OCI-LY7 (cell line): ENCODE measurements at regions of chr1 and their contacts with region 1.

Region 1: GRCh38 chr1:39196244-39197215 is 8.0 kb upstream of the MACF1 start:
- DNase-seq: peak; percentile 92
- H3K4me3 ChIP-seq: peak overlapping the region; percentile 60
- H3K27ac ChIP-seq: peak overlapping the region; percentile 98
- H3K4me1 ChIP-seq: peaks cover 81% of the 10 kb centered on the region
- CTCF ChIP-seq: no peak

Region 2: GRCh38 chr1:38973659-38974424 is 222.7 kb before region 1 on chr1:
- CTCF ChIA-PET with region 1: no interaction called
- POLR2A ChIA-PET with region 1: no interaction called
- intact Hi-C with region 1: no loop called
- DNase-seq: no peak
- H3K4me3 ChIP-seq: no peak overlapping the region
- H3K27ac ChIP-seq: no peak overlapping the region
- H3K4me1 ChIP-seq: no peaks in the 10 kb centered on the region
- CTCF ChIP-seq: no peak

Region 3: DNA sequence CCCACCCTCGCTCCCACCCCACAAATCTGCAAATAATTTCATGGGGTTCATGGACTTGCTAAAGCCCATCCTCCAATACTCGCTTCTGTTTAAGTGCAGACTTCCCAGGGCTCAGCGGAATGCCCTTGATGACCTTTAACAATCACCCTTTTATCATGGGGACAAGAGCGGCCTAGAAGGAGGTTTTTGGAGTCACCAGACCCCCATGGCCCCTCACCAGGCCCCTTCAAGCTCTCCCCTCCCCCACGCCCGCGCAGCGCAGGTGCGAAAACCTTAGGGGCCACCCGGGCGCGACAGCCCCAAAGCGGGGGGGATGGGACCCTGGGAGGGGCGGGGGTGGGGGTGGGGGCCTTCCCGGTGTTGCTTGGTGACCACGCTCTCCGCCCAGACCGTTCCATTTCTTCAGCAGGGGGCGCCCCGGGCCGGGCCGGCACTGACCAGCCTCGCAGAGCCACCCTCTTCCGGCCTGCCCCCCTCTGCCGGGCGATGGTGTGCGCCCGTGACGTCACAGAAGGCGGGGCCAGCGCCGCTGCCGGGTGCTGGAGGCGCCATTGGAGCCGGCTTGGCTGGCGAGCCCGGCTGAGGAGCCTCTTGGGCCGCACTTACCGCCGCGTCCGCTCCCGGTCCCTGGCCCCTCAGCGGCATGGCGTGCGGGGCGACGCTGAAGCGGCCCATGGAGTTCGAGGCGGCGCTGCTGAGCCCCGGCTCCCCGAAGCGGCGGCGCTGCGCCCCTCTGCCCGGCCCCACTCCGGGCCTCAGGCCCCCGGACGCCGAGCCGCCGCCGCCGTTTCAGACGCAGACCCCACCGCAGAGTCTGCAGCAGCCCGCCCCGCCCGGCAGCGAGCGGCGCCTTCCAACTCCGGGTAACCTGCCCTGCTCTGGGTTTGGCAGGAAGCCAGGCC is 205.5 kb before region 1 on chr1 and contains the start of gene AKIRIN1:
- CTCF ChIA-PET with region 1: no interaction called
- POLR2A ChIA-PET with region 1: no interaction called
- intact Hi-C with region 1: no loop called
- DNase-seq: peak; percentile 95
- H3K4me3 ChIP-seq: peak within 1 kb of the TSS; percentile 93
- H3K27ac ChIP-seq: peak within 1 kb of the TSS; percentile 57
- H3K4me1 ChIP-seq: peaks cover 19% of the 10 kb centered on the region
- CTCF ChIP-seq: no peak
- total RNA-seq, gene AKIRIN1: 35.0 and 40.0 TPM in 2 replicates

Region 4: GRCh38 chr1:39098546-39099250 is 97.8 kb before region 1 on chr1:
- CTCF ChIA-PET with region 1: interaction called, 12 read pairs
- POLR2A ChIA-PET with region 1: no interaction called
- intact Hi-C with region 1: loop called (anchors 1 kb)
- DNase-seq: peak; percentile 81
- H3K4me3 ChIP-seq: no peak overlapping the region
- H3K27ac ChIP-seq: no peak overlapping the region
- H3K4me1 ChIP-seq: peaks cover 18% of the 10 kb centered on the region
- CTCF ChIP-seq: peak; percentile 89

Region 5: DNA sequence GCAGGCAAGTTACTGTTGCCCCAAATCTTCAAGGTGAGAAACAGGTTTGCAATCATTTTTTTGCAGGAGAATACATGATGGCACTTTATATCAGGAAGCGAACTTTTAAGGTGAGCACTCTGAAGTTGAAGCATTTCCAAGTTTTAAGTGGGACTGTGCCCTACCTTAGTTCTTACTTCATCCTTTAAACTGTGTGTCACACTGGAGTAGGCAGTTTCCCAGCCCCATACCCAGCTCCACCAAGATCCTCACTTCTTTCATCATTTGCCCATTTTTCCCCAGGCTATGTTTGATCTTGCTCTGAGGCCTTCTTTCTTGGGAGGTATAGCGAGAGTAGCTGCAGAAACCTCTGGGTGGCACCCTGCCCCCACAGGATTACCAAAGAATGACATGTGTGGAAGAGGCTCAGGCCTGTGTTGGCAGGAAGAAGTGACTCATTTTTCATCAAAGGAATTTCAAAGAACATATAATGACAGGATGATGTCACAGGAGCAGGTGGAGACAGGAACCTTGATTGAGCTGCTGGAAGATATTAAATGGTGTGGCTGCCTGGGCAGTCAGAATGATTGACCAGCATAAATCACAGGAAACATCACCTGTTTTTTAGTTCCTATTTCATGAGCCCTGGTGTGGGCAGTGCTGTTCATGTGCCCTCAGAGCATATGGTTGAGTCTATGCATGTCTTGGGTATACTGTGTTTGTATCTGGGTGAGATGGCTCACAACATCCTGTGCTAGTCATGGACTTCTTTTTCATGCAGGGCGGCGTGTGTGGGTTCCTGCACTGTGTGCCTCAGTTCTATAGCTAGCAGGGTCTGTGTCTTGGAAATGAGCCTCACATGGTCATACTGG is 12.8 kb before region 1 on chr1:
- CTCF ChIA-PET with region 1: interaction called, 12 read pairs
- POLR2A ChIA-PET with region 1: interaction called, 4 read pairs
- intact Hi-C with region 1: no loop called
- DNase-seq: peak; percentile 87
- H3K4me3 ChIP-seq: no peak overlapping the region
- H3K27ac ChIP-seq: peak overlapping the region; percentile 64
- H3K4me1 ChIP-seq: peaks cover 25% of the 10 kb centered on the region
- CTCF ChIP-seq: peak; percentile 94

Region 6: GRCh38 chr1:39214998-39215873 is 18.7 kb after region 1 on chr1:
- CTCF ChIA-PET with region 1: interaction called, 12 read pairs
- POLR2A ChIA-PET with region 1: interaction called, 27 read pairs
- intact Hi-C with region 1: loop called (anchors 1 kb)
- DNase-seq: peak; percentile 78
- H3K4me3 ChIP-seq: peak overlapping the region; percentile 75
- H3K27ac ChIP-seq: peak overlapping the region; percentile 88
- H3K4me1 ChIP-seq: peaks cover 55% of the 10 kb centered on the region
- CTCF ChIP-seq: no peak

Region 7: DNA sequence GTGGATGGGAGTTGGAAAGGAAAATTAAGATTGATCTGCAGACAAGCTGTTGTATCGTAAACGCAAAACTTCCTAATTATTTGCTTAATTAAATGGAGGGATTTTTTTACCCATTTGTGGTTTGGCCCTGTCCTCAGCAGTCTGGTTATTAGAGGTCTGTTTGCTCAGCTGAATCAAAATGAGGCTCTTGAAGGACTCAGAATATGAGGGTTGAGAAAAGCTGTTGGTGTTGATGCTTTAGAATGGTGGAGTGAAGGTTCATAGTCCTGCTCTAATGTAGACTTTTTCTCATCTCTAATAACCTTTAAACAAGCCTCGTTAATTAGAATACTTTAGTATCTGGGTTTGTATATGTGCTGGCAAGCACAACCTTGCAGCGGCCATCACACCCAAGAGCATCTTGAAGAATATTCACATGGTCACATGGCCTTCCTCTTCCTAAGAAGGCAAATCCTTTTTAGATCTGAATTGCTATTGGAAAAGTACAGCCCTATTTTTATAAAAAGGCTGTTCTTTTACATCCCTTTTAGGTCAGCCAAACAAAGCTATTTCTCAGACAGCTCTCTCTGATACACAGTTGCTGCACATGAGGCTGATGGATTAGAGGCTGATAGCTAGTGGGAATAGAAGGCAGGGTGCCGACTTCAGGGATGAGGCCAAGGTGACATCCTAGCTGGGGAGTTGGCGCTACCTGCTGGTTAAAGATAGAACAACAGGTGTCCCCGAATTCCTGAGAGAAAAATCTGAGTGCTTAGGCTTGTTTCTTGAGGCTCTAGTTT is 61.8 kb after region 1 on chr1:
- CTCF ChIA-PET with region 1: interaction called, 26 read pairs
- POLR2A ChIA-PET with region 1: interaction called, 15 read pairs
- intact Hi-C with region 1: loop called (anchors 1 kb)
- DNase-seq: peak; percentile 68
- H3K4me3 ChIP-seq: no peak overlapping the region
- H3K27ac ChIP-seq: peak overlapping the region; percentile 38
- H3K4me1 ChIP-seq: peaks cover 29% of the 10 kb centered on the region
- CTCF ChIP-seq: peak; percentile 97

Region 8: DNA sequence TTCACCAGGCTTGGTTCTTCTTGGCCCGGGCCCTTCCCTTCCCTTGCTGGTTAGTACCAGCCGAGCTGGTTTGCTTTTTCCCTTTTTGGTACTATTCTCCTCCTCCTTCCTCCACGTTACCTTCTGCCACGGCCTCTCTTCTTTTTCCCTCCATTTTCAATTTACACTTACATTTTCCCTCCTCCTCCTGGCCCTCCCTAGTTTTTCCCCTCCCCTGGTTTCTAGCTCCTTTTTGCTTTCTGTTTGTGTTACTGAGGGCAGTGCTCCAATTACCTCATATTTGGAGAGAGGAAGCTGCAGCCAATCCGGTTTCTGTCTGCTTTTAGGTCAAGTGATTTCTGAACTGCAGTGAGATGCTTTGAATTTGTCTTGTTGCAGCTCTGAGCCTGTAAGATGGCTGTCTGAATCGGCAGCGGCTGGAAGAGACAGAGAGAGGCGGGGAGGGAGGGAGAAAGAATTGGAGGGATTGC is 71.6 kb after region 1 on chr1:
- CTCF ChIA-PET with region 1: interaction called, 8 read pairs
- POLR2A ChIA-PET with region 1: interaction called, 11 read pairs
- intact Hi-C with region 1: no loop called
- DNase-seq: no peak
- H3K4me3 ChIP-seq: no peak overlapping the region
- H3K27ac ChIP-seq: no peak overlapping the region
- H3K4me1 ChIP-seq: peaks cover 64% of the 10 kb centered on the region
- CTCF ChIP-seq: no peak

Region 9: GRCh38 chr1:39538588-39539465 is 342.3 kb after region 1 on chr1:
- CTCF ChIA-PET with region 1: no interaction called
- POLR2A ChIA-PET with region 1: interaction called, 4 read pairs
- intact Hi-C with region 1: loop called (anchors 2 kb)
- DNase-seq: peak; percentile 73
- H3K4me3 ChIP-seq: no peak overlapping the region
- H3K27ac ChIP-seq: no peak overlapping the region
- H3K4me1 ChIP-seq: peaks cover 19% of the 10 kb centered on the region
- CTCF ChIP-seq: peak; percentile 99